ENCODE measurements at regions of chr22 and their contacts with region 1.

Region 1: DNA sequence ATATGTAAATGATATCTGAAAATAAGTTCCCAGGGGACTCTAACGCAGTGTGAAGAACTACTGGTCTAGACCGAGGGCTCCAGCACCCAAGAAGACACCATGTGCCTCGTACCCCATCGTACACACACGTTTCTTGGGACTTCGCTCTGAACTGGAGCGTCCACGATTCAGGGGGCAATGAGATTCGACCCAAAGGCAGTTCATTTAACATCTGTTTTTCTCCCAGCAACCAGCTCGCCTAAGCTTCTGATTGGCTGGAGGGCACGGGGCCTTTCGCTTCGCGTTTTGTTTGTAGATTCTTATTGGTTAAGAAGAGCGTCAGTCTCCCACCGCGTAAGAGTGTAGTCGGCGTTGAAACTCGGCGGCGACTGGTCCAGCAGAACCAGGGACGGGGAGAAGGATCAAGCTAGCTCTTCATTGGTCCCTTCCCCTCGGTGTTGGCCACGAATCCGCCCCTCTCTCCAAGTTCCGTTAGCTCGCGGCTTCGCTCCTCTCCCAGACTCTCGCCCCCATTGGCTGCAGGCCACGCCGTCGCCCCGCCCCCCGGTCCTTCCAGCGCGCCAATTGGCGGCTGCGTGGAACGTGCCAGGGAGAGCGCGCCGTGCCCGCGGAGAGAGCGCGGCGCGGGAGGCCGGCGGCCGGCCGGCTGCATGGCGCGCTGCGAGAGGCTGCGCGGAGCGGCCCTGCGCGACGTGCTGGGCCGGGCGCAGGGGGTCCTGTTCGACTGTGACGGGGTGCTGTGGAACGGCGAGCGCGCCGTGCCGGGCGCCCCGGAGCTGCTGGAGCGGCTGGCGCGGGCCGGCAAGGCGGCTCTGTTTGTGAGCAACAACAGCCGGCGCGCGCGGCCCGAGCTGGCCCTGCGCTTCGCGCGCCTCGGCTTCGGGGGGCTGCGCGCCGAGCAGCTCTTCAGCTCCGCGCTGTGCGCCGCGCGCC is at the start of gene PDXP:
- DNase-seq: peak; percentile 98 to 99
- H3K4me3 ChIP-seq: peak within 1 kb of the TSS; percentile 71 to 94 (median 76)
- H3K27ac ChIP-seq: no peak within 1 kb of the TSS
- H3K4me1 ChIP-seq: peaks cover 0 to 21% (median 6%) of the 10 kb centered on the region in 4 experiments; a peak in 5 of 7 replicates
- H3K27me3 ChIP-seq: no peaks in the 10 kb centered on the region
- CTCF ChIP-seq: no peak
- EP300 ChIP-seq: no peak
- POLR2A ChIP-seq: peak in 1 of 2 experiments; percentile 63; a peak in 2 of 3 replicates
- RAD21 ChIP-seq: no peak
- total RNA-seq, gene PDXP: 35.7 and 36.6 TPM in 2 replicates

Region 2: DNA sequence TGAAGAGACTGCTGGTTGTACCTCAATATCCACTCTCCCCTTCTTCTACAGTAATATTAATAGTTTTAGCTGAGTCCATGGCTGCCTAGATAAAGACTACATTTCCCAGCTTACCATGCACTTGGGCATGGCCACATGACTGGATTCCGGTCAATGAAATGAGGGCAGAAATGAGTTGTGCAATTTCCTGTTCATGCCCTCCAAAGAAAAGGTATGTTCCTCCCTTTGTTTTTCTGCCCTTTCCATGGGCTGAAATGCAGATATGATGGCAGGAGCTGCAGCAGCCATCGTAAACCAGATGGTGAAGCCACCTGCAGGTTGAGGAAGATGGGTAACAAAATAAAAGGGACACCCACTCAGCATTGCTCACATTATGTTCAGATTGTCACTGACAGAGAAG is 215.9 kb before region 1 on chr22:
- CTCF ChIA-PET with region 1: no interaction called
- POLR2A ChIA-PET with region 1: no interaction called
- DNase-seq: no peak
- H3K4me3 ChIP-seq: no peak overlapping the region
- H3K27ac ChIP-seq: no peak overlapping the region
- H3K4me1 ChIP-seq: no peaks in the 10 kb centered on the region
- H3K27me3 ChIP-seq: no peaks in the 10 kb centered on the region; a peak in 1 of 7 replicates
- CTCF ChIP-seq: no peak
- EP300 ChIP-seq: no peak
- POLR2A ChIP-seq: no peak
- RAD21 ChIP-seq: no peak

Region 3: DNA sequence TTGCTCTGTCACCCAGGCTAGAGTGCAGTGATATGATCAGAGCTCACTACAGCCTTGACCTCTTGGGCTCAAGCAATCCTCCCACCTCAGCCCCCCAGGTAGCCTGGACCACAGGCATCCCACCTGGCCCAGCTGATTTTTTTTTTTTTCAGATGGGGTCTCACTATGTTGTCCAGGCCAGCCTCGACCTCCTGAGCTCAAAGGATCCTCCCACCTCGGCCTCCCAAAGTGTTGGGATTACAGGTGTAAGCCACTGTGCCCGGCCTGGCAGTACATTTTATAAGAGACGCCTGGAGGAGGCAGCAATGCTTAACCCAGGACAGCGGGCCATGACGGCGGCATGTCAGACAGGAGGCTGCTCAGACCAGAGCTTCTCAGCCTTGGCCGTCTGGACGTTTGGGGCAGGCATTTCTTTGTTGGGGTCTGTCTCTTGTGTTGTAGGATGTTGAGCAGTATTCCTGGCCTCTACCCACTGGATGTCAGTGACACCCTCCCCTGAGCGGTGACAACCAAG is 82.9 kb before region 1 on chr22:
- CTCF ChIA-PET with region 1: no interaction called
- POLR2A ChIA-PET with region 1: no interaction called
- DNase-seq: no peak
- H3K4me3 ChIP-seq: no peak overlapping the region
- H3K27ac ChIP-seq: no peak overlapping the region
- H3K4me1 ChIP-seq: peaks cover 0 to under 1% (median under 1%) of the 10 kb centered on the region in 4 experiments; a peak in 1 of 7 replicates
- H3K27me3 ChIP-seq: no peaks in the 10 kb centered on the region; a peak in 1 of 7 replicates
- CTCF ChIP-seq: no peak
- EP300 ChIP-seq: no peak
- POLR2A ChIP-seq: no peak
- RAD21 ChIP-seq: no peak

Region 4: DNA sequence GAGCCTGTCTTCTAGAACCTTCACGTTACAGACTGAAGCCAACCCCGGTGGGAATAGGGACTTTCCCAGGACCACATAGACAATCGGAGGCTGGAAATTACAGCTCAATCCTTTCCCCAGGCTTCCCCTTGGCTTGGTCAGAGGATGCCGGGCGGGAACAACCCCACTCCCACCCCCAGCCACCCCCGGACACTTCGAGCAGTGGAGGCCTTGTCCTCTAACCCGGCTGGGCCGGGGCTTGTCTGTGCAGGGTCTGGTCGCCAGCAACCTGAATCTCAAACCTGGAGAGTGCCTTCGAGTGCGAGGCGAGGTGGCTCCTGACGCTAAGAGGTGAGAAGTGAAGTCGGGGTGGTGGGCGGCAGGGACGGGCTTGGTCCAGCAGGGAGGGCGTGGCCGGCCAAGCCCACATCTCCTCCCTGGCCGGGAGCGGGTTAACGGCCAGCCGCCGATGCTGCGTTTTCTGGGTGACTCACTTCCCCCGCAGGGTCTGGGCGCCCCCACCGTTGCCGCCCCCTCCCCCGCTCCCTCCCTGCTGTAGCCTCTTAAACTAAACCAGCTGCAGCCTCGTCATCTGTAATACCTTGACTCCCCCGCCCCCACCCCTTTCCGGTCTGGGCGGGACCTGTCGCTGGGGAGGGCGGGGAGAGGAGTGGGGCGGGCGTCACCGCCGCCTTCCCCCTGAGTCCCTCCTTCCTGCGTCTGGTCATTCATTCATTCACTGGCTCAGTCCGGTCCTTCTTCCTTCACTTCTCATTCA is 18.5 kb after region 1 on chr22:
- CTCF ChIA-PET with region 1: interaction called, 52 read pairs
- POLR2A ChIA-PET with region 1: interaction called, 37 read pairs
- DNase-seq: peak; percentile 78 to 87
- H3K4me3 ChIP-seq: peak overlapping the region; percentile 28 to 63 (median 36)
- H3K27ac ChIP-seq: no peak overlapping the region
- H3K4me1 ChIP-seq: peaks cover 0 to 19% (median 13%) of the 10 kb centered on the region in 4 experiments; a peak in 6 of 7 replicates
- H3K27me3 ChIP-seq: peaks cover 0 to 2% (median 0%) of the 10 kb centered on the region in 4 experiments; a peak in 1 of 7 replicates
- CTCF ChIP-seq: no peak
- EP300 ChIP-seq: 0 out of 3 replicates have a peak, but pooled peaks of 1 of the 2 experiments have one; percentile 27
- POLR2A ChIP-seq: peak in 1 of 2 experiments; percentile 26; a peak in 1 of 3 replicates
- RAD21 ChIP-seq: no peak

Region 5: DNA sequence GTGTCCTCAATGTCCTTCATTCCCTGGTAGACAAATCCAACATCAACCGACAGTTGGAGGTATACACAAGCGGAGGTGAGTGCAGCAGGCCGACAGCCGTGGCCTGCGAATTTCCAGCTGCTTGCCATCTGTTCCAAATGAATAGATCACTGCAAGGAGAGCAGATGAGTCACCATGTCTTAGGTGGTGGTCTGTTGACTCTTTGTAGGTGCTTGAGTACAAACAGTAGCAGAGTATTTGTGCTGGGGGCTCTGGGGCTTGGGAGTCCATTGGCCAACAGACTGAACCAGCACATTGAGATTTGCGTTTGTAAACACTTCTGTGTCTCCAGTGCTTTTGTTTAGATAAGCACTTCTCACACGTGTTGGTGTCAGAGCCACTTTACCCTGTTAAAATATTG is 211.9 kb after region 1 on chr22:
- CTCF ChIA-PET with region 1: no interaction called
- POLR2A ChIA-PET with region 1: no interaction called
- DNase-seq: no peak
- H3K4me3 ChIP-seq: no peak overlapping the region
- H3K27ac ChIP-seq: no peak overlapping the region
- H3K4me1 ChIP-seq: no peaks in the 10 kb centered on the region
- H3K27me3 ChIP-seq: no peaks in the 10 kb centered on the region
- CTCF ChIP-seq: no peak
- EP300 ChIP-seq: no peak
- POLR2A ChIP-seq: no peak
- RAD21 ChIP-seq: no peak

Measured in H1 (cell line).